MCF 10A (cell line): ENCODE measurements at regions of chr7 and their contacts with region 1.

Region 1: DNA sequence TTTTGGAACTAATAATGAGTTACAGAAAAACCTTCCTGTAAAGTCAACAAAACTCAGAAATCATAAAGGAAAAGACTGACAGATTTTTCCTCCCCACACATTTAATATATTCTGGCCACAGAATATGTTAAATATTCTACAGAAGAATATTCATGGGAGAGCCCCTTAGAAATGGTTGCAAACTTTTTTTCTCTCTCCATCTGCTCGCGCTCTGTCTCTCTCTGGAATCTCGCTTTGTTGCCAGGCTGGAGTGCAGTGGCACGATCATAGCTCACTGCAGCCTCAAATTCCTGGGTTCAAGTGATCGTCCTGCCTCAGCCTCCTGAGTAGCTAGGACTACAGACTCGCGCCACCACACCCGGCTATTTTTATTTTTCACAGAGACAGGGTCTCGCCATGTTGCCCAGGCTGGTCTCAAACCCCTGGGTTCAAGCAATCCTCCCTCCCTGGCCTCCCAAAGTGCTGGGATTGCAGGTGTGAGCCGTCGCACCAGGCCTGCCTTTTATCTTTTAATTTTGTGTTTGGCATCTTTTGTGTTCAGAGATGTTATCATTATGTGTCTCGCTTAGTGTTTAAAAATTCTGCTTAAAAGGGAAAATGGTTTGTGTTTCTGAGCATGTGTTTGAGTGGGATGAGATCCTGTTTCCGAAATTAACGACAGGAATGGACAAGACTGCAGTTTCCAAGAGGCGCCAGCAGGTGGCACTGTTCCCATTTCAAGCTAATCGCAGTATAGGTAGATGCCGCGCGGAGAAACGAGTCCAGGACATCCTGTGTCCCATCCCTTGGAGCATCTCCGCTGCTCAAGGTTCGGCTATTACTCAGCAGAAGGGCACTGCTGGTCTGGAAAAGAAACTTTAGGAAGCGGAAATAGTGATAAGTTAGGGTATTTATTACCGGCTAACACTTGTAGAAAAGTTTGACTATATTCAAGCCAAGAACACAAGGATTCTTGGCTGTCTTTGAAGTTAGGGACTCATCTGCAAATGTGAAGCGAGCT is 23.1 kb upstream of the ST7 start:
- DNase-seq: peak; percentile 84
- H3K4me3 Mint-ChIP-seq: no peak overlapping the region
- H3K27ac Mint-ChIP-seq: no peak overlapping the region
- H3K4me1 Mint-ChIP-seq: peaks cover 6% of the 10 kb centered on the region
- H3K27me3 Mint-ChIP-seq: no peaks in the 10 kb centered on the region
- CTCF ChIP-seq: peak; percentile 84

Region 2: DNA sequence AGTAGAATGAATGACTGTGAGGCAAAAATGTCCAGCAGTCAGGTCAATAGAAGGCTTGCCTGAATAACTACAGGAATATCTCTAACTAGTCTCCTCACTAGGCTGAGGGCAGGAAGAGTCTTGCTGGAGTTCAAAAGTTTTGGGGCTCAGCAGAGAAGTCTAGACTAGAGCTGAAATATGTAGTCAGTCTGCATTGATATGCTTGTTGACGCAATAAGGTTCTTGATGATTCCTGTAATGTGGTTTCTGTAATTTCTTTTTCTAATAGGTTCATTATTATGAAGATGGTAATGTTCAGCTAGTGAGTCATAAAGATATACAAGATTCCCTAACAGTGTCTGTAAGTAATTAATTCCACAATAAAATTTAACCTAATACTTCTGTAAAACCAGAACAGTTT is 18.4 kb before region 1 on chr7:
- CTCF ChIA-PET with region 1: interaction called, 16 read pairs
- POLR2A ChIA-PET with region 1: interaction called, 3 read pairs
- intact Hi-C with region 1: no loop called
- DNase-seq: no peak
- H3K4me3 Mint-ChIP-seq: no peak overlapping the region
- H3K27ac Mint-ChIP-seq: no peak overlapping the region
- H3K4me1 Mint-ChIP-seq: no peaks in the 10 kb centered on the region
- H3K27me3 Mint-ChIP-seq: no peaks in the 10 kb centered on the region
- CTCF ChIP-seq: no peak

Region 3: DNA sequence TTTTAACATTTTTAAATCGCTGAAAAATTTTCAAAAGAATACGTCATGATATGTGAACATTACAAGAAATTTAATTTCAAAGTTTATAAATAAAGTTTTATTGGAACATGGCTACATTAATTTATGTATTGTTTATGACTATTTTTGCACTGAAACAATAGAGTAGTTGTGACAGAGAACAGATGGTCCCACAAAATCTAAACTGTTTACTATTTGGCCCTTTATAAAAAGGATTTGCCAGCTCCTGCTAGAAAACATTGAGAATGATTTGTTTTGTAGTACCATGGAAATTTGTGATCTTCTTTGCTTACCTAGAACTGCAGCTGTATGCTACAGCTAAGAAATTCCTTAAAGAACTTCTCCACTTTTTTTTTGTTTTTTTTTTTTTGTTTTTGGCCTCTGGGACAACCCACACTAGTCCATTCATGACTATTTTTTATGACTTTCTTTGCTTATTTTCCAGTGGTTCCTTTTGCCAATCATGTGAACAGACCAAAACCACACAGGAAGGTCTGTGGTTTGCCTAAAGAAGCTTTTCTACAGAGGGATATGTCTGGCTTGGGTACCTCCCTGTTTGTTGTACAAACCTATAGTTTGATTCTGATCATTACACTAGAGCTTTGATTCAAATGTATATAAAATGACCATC is 78.8 kb after region 1 on chr7:
- CTCF ChIA-PET with region 1: interaction called, 17 read pairs
- POLR2A ChIA-PET with region 1: interaction called, 3 read pairs
- intact Hi-C with region 1: loop called (anchors 1 kb)
- DNase-seq: peak; percentile 14
- H3K4me3 Mint-ChIP-seq: no peak overlapping the region
- H3K27ac Mint-ChIP-seq: no peak overlapping the region
- H3K4me1 Mint-ChIP-seq: peaks cover 13% of the 10 kb centered on the region
- H3K27me3 Mint-ChIP-seq: no peaks in the 10 kb centered on the region
- CTCF ChIP-seq: no peak

Region 4: GRCh38 chr7:117045927-117046710 is 115.9 kb after region 1 on chr7:
- CTCF ChIA-PET with region 1: no interaction called
- POLR2A ChIA-PET with region 1: no interaction called
- intact Hi-C with region 1: no loop called
- DNase-seq: no peak
- H3K4me3 Mint-ChIP-seq: no peak overlapping the region
- H3K27ac Mint-ChIP-seq: no peak overlapping the region
- H3K4me1 Mint-ChIP-seq: no peaks in the 10 kb centered on the region
- H3K27me3 Mint-ChIP-seq: no peaks in the 10 kb centered on the region
- CTCF ChIP-seq: no peak

Region 5: GRCh38 chr7:117119192-117119924 is 189.1 kb after region 1 on chr7:
- CTCF ChIA-PET with region 1: interaction called, 91 read pairs
- POLR2A ChIA-PET with region 1: interaction called, 3 read pairs
- intact Hi-C with region 1: loop called (anchors 1 kb)
- DNase-seq: peak; percentile 91
- H3K4me3 Mint-ChIP-seq: no peak overlapping the region
- H3K27ac Mint-ChIP-seq: no peak overlapping the region
- H3K4me1 Mint-ChIP-seq: peaks cover under 1% of the 10 kb centered on the region
- H3K27me3 Mint-ChIP-seq: no peaks in the 10 kb centered on the region
- CTCF ChIP-seq: peak; percentile 74

Region 6: GRCh38 chr7:117152213-117153007 is 222.2 kb after region 1 on chr7:
- CTCF ChIA-PET with region 1: no interaction called
- POLR2A ChIA-PET with region 1: no interaction called
- intact Hi-C with region 1: no loop called
- DNase-seq: no peak
- H3K4me3 Mint-ChIP-seq: no peak overlapping the region
- H3K27ac Mint-ChIP-seq: no peak overlapping the region
- H3K4me1 Mint-ChIP-seq: no peaks in the 10 kb centered on the region
- H3K27me3 Mint-ChIP-seq: no peaks in the 10 kb centered on the region
- CTCF ChIP-seq: no peak

Region 7: GRCh38 chr7:117195361-117196029 is 265.3 kb after region 1 on chr7:
- CTCF ChIA-PET with region 1: no interaction called
- POLR2A ChIA-PET with region 1: no interaction called
- intact Hi-C with region 1: no loop called
- DNase-seq: no peak
- H3K4me3 Mint-ChIP-seq: no peak overlapping the region
- H3K27ac Mint-ChIP-seq: no peak overlapping the region
- H3K4me1 Mint-ChIP-seq: no peaks in the 10 kb centered on the region
- H3K27me3 Mint-ChIP-seq: no peaks in the 10 kb centered on the region
- CTCF ChIP-seq: no peak

Region 8: DNA sequence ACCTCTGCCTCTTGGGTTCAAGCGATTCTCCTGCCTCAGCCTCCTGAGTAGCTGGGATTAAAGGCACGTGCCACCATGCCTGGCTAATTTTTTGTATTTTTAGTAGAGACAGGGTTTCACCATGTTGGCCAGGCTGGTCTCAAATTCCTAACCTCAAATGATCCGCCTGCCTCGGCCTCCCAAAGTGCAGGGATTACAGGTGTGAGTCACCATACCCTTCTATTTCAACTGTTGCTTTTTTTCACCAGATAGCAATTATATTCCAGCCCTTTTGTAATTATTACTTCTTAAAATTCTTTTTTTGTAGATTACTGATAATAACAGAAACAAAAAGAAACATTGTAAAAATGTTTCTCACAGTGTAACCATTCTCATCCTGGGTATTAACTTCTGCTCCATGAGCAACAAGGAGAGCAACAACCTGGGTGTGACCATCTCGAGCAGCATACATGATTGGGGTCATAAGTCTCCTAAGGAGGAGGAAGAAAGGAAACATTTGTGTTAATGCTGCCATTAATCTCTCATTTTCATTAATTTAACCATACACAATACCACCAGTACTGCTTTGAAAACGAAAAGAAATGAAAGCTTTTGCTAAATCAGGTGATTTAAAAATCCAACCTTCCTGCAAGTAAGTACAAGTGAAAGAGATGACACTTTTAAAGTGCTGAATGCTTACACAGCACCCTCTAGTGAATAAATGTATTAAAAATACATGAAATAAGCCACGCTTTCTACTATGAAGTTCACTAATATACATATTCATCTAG is 455.3 kb after region 1 on chr7:
- CTCF ChIA-PET with region 1: interaction called, 4 read pairs
- POLR2A ChIA-PET with region 1: no interaction called
- intact Hi-C with region 1: loop called (anchors 5 kb)
- DNase-seq: peak; percentile 16
- H3K4me3 Mint-ChIP-seq: no peak overlapping the region
- H3K27ac Mint-ChIP-seq: no peak overlapping the region
- H3K4me1 Mint-ChIP-seq: no peaks in the 10 kb centered on the region
- H3K27me3 Mint-ChIP-seq: peaks cover 57% of the 10 kb centered on the region
- CTCF ChIP-seq: peak; percentile 35